ENCODE measurements at regions of chr1 and their contacts with region 1.

Region 1: DNA sequence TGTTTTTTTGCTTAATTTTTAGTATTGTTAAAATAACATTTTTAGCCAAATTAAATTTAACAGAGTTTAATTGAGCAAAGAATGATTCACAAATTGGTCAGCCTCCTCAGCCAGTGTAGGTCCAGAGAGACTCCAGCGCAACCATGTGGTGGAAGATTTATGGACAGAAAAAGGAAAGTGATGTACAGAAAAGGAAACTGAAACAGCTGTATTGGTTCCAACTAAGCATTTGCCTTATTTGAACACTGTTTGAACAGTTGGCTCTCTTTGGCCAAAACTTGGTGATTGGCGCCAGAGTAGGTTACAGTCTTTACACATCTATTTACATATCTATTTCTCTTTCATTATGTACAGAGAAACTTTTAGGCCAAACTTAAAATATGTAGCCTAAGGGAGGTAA is 19.4 kb downstream of the RPS6KC1 start:
- DNase-seq: peak; percentile 49
- ATAC-seq: peak; percentile 88
- H3K4me3 Mint-ChIP-seq: no peak overlapping the region
- H3K27ac Mint-ChIP-seq: no peak overlapping the region
- H3K4me1 Mint-ChIP-seq: peaks cover 15% of the 10 kb centered on the region
- H3K27me3 Mint-ChIP-seq: no peaks in the 10 kb centered on the region

Region 2: DNA sequence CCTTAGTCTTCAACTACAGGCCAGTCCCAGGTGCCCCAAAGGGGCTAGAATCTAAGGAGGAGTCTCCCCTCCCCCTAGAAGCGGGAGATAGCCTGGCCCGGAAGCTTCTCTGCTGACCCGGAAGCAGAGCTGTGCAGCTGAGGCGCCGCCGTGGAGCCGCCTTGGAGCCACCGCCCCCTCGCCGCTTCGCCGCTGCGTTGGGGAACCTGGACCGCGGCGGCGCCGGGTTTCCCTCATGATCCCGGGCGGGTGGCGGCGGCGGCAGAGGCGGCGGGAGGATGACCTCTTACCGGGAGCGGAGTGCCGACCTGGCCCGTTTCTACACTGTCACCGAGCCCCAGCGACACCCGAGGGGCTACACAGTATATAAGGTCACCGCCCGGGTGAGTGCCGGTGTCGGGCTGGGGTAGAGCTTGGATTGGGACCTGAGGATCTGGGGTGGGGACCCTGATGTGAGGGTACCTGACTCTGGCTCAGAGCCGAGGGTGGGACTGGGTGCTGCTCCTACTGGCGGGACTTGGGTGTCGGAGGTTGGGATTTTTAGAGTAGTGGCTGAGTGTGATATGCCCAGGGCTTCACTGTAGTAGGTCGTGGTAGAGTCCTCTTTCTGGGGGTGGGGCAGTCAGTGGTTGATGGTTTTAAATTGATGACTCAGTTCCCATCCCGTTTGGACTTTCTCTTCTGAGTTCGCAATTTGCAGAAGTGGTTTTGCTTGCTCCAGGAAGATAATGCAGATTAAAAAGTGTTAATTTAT is 19.1 kb before region 1 on chr1 and contains the start of gene RPS6KC1:
- CTCF ChIA-PET with region 1: interaction called, 3 read pairs
- POLR2A ChIA-PET with region 1: no interaction called
- intact Hi-C with region 1: loop called in 1 of 2 experiments (anchors 1 kb)
- DNase-seq: peak; percentile 92
- ATAC-seq: peak; percentile 97
- H3K4me3 Mint-ChIP-seq: peak within 1 kb of the TSS; percentile 82
- H3K27ac Mint-ChIP-seq: peak within 1 kb of the TSS; percentile 93
- H3K4me1 Mint-ChIP-seq: peaks cover 27% of the 10 kb centered on the region
- H3K27me3 Mint-ChIP-seq: peaks cover 9% of the 10 kb centered on the region
- total RNA-seq, gene RPS6KC1: 4.9 to 5.7 TPM

Measured in activated CD4-positive, alpha-beta T cell treated with anti-CD3 and anti-CD28 coated beads for 36 hours (primary cell).